ENCODE measurements at regions of chr3 and their contacts with region 1.

Region 1: DNA sequence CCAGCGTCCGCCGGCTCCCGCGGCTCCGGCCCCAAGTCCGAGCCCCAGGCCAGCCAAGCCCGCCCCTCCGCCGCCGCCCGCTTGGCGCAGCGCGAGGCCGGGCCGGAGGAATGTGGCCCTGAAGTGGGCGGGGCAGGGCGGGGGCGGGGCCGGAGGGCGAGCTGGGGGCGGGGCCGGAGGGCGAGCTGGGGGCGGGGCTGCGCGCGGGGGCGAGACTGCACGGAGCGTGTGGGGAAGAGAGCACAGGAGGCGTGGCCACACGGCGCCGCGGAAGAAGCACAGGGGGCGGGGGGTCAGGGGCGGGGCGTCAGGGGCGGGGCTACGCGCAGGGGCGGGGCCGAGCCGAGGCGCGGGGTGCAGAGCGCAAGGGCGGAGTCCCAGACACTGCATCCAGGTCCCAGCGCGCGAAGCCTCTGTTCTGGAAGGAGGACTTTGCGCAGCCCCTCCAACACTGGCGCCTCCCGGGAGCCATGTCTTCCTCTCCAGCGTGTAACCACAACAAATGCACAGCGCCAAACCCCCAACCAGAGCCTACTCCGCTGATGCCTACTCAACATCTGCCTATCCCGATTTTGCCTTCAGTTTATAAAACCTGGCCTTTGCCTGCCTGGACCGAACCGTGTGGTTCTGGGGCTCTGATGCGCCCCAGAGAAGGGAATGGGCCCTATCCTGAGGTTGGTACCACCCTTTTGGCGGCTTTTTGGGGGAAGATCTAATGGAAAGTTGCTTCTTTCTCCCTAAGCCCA is 105.5 kb downstream of the IQSEC1 start:
- DNase-seq: peak; percentile 85 to 93 (median 92)
- H3K4me3 ChIP-seq: peak overlapping the region; percentile 39 to 81 (median 67)
- H3K27ac ChIP-seq: no peak overlapping the region
- H3K4me1 ChIP-seq: peaks cover 3 to 53% (median 40%) of the 10 kb centered on the region in 4 experiments
- H3K27me3 ChIP-seq: no peaks in the 10 kb centered on the region

Region 2: DNA sequence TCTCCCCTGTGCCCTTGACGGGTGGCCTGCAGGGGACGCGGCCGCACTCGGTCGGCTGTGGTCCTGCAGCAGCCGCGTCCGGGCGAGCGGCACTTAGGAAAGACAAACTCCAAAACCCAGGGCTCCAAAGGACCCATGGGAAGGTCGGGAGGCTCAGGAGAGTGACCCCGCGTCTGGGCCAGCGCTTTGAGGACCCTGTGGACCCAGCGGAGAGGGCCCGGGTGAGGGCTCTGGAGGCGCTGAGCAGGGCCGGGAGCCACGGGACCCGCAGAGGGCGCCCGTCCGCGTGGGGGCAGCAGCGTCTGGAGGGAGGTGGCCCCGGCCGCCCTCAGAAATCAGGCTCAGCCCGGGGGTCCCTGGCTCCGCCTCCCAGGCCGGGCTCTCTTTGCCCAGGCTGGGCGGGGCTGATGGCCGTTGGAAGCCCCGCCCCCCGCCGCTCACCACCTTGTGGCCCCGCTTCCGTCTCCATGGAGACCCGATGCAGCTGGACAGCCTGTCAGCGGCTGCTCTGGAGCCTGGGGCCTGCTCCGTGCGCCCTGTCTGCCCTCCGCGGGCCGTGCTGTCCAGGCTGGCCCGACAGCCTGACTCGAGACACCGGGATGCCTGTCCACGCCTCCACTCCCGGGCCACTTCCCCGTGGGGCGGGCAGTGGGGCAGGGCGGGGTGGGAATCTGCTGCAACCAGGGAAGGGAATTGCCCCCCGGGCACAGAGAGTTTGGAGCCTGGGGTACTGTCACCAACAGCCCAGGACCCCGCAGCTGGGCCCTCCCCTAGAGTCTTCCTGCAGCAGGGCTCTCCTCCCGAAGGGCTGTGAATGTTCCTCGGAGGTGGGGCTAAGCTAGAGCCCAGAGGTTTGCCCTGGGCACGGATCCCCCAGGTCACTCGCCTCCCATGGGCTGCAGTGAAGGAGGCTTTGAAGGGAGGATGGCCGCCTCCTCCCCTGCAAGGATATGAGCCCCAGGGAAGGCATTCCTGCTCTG is 91.6 kb before region 1 on chr3:
- CTCF ChIA-PET with region 1: no interaction called
- POLR2A ChIA-PET with region 1: no interaction called
- DNase-seq: peak; percentile 31 to 57 (median 49)
- H3K4me3 ChIP-seq: peak overlapping the region in 4 of 7 experiments; percentile 15 to 66 (median 48)
- H3K27ac ChIP-seq: no peak overlapping the region
- H3K4me1 ChIP-seq: peaks cover 0 to 20% (median 19%) of the 10 kb centered on the region in 4 experiments
- H3K27me3 ChIP-seq: no peaks in the 10 kb centered on the region

Region 3: GRCh38 chr3:12948891-12949711 is 18.7 kb before region 1 on chr3:
- CTCF ChIA-PET with region 1: interaction called, 400 read pairs
- POLR2A ChIA-PET with region 1: no interaction called
- DNase-seq: peak; percentile 37 to 84 (median 76)
- H3K4me3 ChIP-seq: peak overlapping the region in 1 of 7 experiments; percentile 14
- H3K27ac ChIP-seq: no peak overlapping the region
- H3K4me1 ChIP-seq: peaks cover 0 to 52% (median 48%) of the 10 kb centered on the region in 4 experiments
- H3K27me3 ChIP-seq: no peaks in the 10 kb centered on the region